Naive thymus-derived CD4-positive, alpha-beta T cell (primary cell): ENCODE measurements at regions of chr20 and their contacts with region 1.

Region 1: DNA sequence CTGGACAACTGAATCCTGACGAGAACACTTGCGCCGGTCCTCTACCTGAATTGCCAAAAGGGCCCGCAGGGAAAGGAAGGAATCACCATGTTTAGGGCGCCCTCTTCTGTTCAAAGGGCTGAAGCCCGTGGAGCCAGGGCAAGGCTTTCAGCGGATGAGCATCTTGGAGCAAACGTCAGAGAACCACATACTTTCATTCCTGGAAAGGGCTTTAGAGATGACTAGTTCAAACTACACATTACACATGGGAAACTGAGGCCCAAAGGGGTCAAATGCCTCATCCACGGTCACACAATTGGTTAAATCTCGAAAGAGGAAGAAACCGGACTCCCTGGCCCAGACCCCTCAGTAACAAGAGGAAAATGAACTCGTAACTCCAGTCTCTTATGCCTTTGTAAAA is 11.5 kb upstream of the ZNF133 start:
- DNase-seq: peak in 8 of 9 donors; percentile 12 to 62 (median 36)
- ATAC-seq: peak; percentile 74
- H3K4me3 ChIP-seq: no peak overlapping the region
- H3K4me3 Mint-ChIP-seq: no peak overlapping the region
- H3K27ac ChIP-seq: no peak overlapping the region
- H3K27ac Mint-ChIP-seq: no peak overlapping the region
- H3K4me1 ChIP-seq: no peaks in the 10 kb centered on the region
- H3K4me1 Mint-ChIP-seq: peaks cover 0 to 6% (median 0%) of the 10 kb centered on the region in 7 donors
- H3K27me3 ChIP-seq: peaks cover 2 to 4% of the 10 kb centered on the region in 2 donors
- H3K27me3 Mint-ChIP-seq: peaks cover 43 to 67% (median 50%) of the 10 kb centered on the region in 5 donors

Region 2: GRCh38 chr20:18258126-18258860 is 18.5 kb before region 1 on chr20:
- CTCF ChIA-PET with region 1: interaction called, 3 read pairs
- POLR2A ChIA-PET with region 1: no interaction called
- intact Hi-C with region 1: loop called in 1 of 2 experiments (anchors 1 kb)
- DNase-seq: no peak
- ATAC-seq: no peak
- H3K4me3 ChIP-seq: no peak overlapping the region
- H3K4me3 Mint-ChIP-seq: no peak overlapping the region
- H3K27ac ChIP-seq: no peak overlapping the region
- H3K27ac Mint-ChIP-seq: no peak overlapping the region
- H3K4me1 ChIP-seq: no peaks in the 10 kb centered on the region
- H3K4me1 Mint-ChIP-seq: peaks cover 0 to 2% (median 0%) of the 10 kb centered on the region in 7 donors
- H3K27me3 ChIP-seq: no peaks in the 10 kb centered on the region
- H3K27me3 Mint-ChIP-seq: peaks cover 0 to 7% (median 4%) of the 10 kb centered on the region in 5 donors

Region 3: DNA sequence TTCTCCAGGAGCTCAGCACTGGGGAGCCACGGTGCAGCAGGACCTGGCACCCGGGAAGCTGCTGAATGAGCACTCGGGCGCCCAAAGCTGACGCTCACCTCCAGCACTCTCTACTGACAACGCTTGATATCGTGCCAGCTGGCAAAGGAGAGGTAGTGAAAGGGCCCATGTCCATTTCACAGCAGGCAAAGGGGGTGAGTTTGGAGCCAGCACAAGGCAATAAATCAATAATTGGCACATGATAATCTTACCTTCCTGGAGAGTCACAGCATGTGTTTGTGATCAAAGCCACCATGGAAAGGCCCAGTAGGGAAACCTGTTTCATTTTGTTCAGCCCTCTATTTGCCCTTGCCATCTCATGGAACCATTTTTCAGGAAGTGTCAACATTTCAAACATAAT is 267.1 kb after region 1 on chr20:
- CTCF ChIA-PET with region 1: no interaction called
- POLR2A ChIA-PET with region 1: no interaction called
- intact Hi-C with region 1: no loop called
- DNase-seq: no peak
- ATAC-seq: no peak
- H3K4me3 ChIP-seq: no peak overlapping the region
- H3K4me3 Mint-ChIP-seq: no peak overlapping the region
- H3K27ac ChIP-seq: no peak overlapping the region
- H3K27ac Mint-ChIP-seq: peak overlapping the region in 2 of 9 donors; percentile 23 to 43
- H3K4me1 ChIP-seq: no peaks in the 10 kb centered on the region
- H3K4me1 Mint-ChIP-seq: peaks cover 0 to 10% (median 0%) of the 10 kb centered on the region in 7 donors
- H3K27me3 ChIP-seq: no peaks in the 10 kb centered on the region
- H3K27me3 Mint-ChIP-seq: no peaks in the 10 kb centered on the region

Region 4: GRCh38 chr20:19540392-19540791 is 1263.6 kb after region 1 on chr20:
- CTCF ChIA-PET with region 1: no interaction called
- POLR2A ChIA-PET with region 1: no interaction called
- intact Hi-C with region 1: no loop called
- DNase-seq: peak in 3 of 9 donors; percentile 4 to 29 (median 18)
- ATAC-seq: no peak
- H3K4me3 ChIP-seq: no peak overlapping the region
- H3K4me3 Mint-ChIP-seq: no peak overlapping the region
- H3K27ac ChIP-seq: no peak overlapping the region
- H3K27ac Mint-ChIP-seq: no peak overlapping the region
- H3K4me1 ChIP-seq: peaks cover 0 to 5% of the 10 kb centered on the region in 2 donors
- H3K4me1 Mint-ChIP-seq: peaks cover 1 to 31% (median 7%) of the 10 kb centered on the region in 7 donors
- H3K27me3 ChIP-seq: no peaks in the 10 kb centered on the region
- H3K27me3 Mint-ChIP-seq: peaks cover 0 to 4% (median 0%) of the 10 kb centered on the region in 5 donors